ENCODE measurements at regions of chr2 and their contacts with region 1.

Region 1: GRCh38 chr2:37389989-37390765 is 45.7 kb downstream of the QPCT start:
- DNase-seq: peak; percentile 79 to 86
- ATAC-seq: peak; percentile 86 to 91
- H3K4me3 ChIP-seq: no peak overlapping the region
- H3K27ac ChIP-seq: peak overlapping the region; percentile 35 to 80
- H3K4me1 ChIP-seq: peaks cover 22% of the 10 kb centered on the region
- CTCF ChIP-seq: no peak
- EP300 ChIP-seq: no peak
- POLR2A ChIP-seq: no peak
- RAD21 ChIP-seq: no peak

Region 2: DNA sequence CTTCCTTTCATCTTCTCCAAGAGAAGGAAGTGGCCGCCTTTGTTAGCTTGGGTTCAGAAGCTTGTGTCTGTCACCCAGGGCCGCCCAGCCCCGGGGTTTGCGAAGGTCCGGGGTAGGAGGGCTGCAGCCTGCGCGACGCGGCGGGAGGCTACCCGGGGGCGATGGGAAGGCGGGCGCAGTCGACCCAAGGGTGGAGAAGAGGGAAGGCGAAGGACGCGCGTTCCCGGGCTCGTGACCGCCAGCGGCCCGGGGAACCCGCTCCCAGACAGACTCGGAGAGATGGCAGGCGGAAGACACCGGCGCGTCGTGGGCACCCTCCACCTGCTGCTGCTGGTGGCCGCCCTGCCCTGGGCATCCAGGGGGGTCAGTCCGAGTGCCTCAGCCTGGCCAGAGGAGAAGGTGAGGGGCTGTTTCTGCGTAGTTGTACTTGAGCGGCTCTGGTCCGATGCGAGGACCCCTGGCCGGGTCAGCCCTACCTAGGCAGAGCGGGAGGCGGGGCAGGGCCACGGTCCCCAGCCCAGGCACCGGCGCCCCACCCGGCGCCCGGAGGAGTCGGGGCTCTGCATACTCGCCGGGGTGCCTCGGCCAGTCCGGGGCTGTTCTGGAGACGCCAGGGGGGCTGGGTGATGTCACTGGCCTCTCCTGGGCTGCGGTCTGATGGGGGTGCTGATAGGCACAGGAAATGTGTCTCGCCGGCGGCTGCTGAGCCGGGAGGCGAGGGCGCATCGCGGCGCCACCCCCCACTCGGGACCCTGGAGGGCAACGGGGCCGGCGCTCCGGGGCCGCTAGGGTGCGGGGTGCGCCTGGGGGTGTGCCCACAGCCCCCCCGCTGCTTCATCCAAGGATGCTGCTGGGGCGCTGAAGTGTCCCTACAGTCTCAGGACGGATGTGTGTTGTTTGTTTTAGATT is 45.5 kb before region 1 on chr2 and contains the start of gene QPCT:
- CTCF ChIA-PET with region 1: interaction called, 11 read pairs
- POLR2A ChIA-PET with region 1: interaction called, 5 read pairs
- DNase-seq: peak; percentile 60 to 87
- ATAC-seq: peak; percentile 83 to 87
- H3K4me3 ChIP-seq: peak within 1 kb of the TSS; percentile 71
- H3K27ac ChIP-seq: peak within 1 kb of the TSS; percentile 69 to 87
- H3K4me1 ChIP-seq: peaks cover 19% of the 10 kb centered on the region
- CTCF ChIP-seq: no peak
- EP300 ChIP-seq: no peak
- POLR2A ChIP-seq: peak; percentile 32; the same call in 1 of the 2 replicates
- RAD21 ChIP-seq: no peak; a peak in 1 of 5 replicates
- polyA plus RNA-seq, gene QPCT: 42.7 and 68.7 TPM in 2 replicates

Region 3: DNA sequence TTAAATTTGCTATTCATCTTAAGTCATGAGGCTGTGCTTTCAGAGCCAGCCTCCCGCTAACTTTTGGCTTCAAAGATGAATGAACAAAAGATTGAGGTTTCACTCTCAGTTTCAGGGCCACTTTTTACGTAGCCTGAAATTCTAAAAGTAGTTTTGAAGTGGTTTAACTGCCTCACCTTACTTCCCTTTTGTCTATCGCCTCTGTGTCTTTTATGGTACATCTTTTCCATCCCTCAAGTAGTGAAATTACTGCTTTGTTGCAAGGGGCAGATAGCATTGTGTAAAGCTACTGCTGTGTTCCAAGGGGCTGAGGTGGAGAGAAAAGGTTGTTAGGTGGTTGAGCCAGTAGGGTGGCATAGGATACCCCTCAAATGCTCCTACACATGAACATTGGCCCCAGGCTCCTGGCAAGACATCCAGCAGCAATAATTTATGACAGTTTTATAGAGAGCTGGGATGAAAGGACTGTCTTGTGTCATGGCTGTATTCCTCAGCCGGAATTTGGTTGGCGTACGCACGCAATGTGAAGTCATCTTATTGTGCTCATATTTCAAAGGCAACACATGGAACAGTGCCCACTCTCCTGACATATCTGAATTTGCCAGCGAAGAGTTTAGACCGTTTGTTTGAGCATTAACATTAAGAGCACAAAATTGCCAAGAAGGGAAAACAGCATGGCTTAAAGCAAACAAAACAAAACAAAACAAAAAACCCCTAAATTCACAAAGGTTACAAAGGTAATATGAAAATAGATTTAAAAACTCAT is 13.6 kb before region 1 on chr2:
- CTCF ChIA-PET with region 1: interaction called, 23 read pairs
- POLR2A ChIA-PET with region 1: no interaction called
- DNase-seq: no peak
- ATAC-seq: no peak; a peak in 1 of 6 replicates
- H3K4me3 ChIP-seq: no peak overlapping the region
- H3K27ac ChIP-seq: no peak overlapping the region
- H3K4me1 ChIP-seq: 0 out of 3 replicates have a peak, but pooled peaks cover 3% of the 10 kb centered on the region
- CTCF ChIP-seq: no peak
- EP300 ChIP-seq: no peak
- POLR2A ChIP-seq: no peak
- RAD21 ChIP-seq: no peak

Region 4: DNA sequence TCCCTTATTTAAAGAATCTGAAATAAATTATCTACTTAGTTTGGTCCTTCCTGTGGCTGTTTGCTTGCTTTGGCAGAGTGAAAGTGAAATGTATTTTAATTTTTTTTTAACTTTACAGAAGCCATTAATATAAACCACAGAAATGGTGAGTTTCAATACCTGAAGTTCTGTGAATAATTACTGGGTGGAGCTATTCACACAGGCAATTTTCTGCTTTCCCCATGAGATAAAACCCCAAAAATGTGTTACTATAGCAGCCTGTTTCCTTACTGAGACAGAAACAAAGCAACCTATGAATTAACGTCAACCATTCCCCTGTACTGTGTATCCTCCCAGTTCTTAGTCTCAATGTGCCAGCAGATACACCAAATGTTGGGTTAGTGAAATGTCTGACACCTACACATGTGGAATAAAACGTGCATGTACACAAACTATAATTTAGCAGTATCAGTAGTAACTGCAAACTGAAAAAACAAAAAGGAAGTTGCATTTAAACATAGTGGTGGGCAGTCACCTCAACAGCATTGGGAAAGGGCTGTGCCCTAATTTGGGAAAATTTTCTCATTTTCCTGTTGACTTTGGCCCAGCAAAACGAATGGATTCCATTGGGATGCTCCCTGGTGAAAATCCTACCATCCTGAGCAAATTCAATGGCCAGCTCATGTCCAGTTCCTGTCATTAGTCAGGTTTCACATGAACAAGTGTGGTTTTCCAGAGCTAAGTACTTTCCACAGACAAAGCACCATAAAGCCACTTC is 461.8 kb after region 1 on chr2:
- CTCF ChIA-PET with region 1: interaction called, 15 read pairs
- POLR2A ChIA-PET with region 1: no interaction called
- DNase-seq: no peak
- ATAC-seq: no peak
- H3K4me3 ChIP-seq: no peak overlapping the region
- H3K27ac ChIP-seq: no peak overlapping the region
- H3K4me1 ChIP-seq: no peaks in the 10 kb centered on the region
- CTCF ChIP-seq: no peak
- EP300 ChIP-seq: no peak
- POLR2A ChIP-seq: no peak
- RAD21 ChIP-seq: no peak

Region 5: GRCh38 chr2:37890893-37891495 is 500.8 kb after region 1 on chr2:
- CTCF ChIA-PET with region 1: interaction called, 68 read pairs
- POLR2A ChIA-PET with region 1: no interaction called
- DNase-seq: peak; percentile 79 to 90
- ATAC-seq: peak; percentile 98 to 100
- H3K4me3 ChIP-seq: no peak overlapping the region
- H3K27ac ChIP-seq: no peak overlapping the region
- H3K4me1 ChIP-seq: no peaks in the 10 kb centered on the region
- CTCF ChIP-seq: peak; percentile 91
- EP300 ChIP-seq: no peak
- POLR2A ChIP-seq: no peak
- RAD21 ChIP-seq: peak; percentile 86 to 94

Region 6: DNA sequence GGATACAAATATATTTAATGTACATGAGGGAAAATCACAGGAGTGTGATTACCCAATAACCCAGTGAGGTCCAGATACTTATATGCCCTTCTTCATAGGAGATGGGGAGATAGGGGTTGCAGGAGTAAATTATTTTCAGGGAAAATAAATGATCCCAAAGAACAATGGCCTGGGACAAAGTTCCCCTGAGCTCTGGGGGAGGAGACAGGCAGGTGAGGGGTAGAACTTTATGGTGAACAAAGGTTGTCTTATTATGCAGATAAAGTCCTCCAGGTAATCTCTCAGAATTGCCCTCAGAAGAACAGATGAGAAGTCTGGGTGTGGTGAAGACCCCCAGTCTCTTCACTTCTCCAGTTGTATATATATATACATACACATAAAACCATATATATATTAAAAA is 512.8 kb after region 1 on chr2:
- CTCF ChIA-PET with region 1: interaction called, 20 read pairs
- POLR2A ChIA-PET with region 1: no interaction called
- DNase-seq: no peak
- ATAC-seq: no peak
- H3K4me3 ChIP-seq: no peak overlapping the region
- H3K27ac ChIP-seq: no peak overlapping the region
- H3K4me1 ChIP-seq: no peaks in the 10 kb centered on the region; the same call in 2 of the 3 replicates
- CTCF ChIP-seq: no peak
- EP300 ChIP-seq: no peak
- POLR2A ChIP-seq: no peak
- RAD21 ChIP-seq: no peak

Measured in A549 (cell line).